ENCODE measurements at regions of chr2 and their contacts with region 1.

Region 1: GRCh38 chr2:68742626-68743415 is 8.2 kb downstream of the ARHGAP25 start:
- DNase-seq: no peak
- ATAC-seq: peak; percentile 49
- H3K4me3 Mint-ChIP-seq: peak overlapping the region; percentile 55
- H3K27ac Mint-ChIP-seq: peak overlapping the region; percentile 87
- H3K4me1 Mint-ChIP-seq: peaks cover 91% of the 10 kb centered on the region
- H3K27me3 Mint-ChIP-seq: no peaks in the 10 kb centered on the region
- CTCF ChIP-seq: no peak

Region 2: GRCh38 chr2:68487773-68488355 is 255.0 kb before region 1 on chr2:
- CTCF ChIA-PET with region 1: interaction called, 10 read pairs
- POLR2A ChIA-PET with region 1: no interaction called
- intact Hi-C with region 1: no loop called
- DNase-seq: no peak
- ATAC-seq: peak; percentile 54
- H3K4me3 Mint-ChIP-seq: no peak overlapping the region
- H3K27ac Mint-ChIP-seq: no peak overlapping the region
- H3K4me1 Mint-ChIP-seq: peaks cover 5% of the 10 kb centered on the region
- H3K27me3 Mint-ChIP-seq: no peaks in the 10 kb centered on the region
- CTCF ChIP-seq: peak; percentile 39

Region 3: GRCh38 chr2:68565858-68566257 is 177.0 kb before region 1 on chr2:
- CTCF ChIA-PET with region 1: no interaction called
- POLR2A ChIA-PET with region 1: no interaction called
- intact Hi-C with region 1: no loop called
- DNase-seq: no peak
- ATAC-seq: no peak
- H3K4me3 Mint-ChIP-seq: no peak overlapping the region
- H3K27ac Mint-ChIP-seq: no peak overlapping the region
- H3K4me1 Mint-ChIP-seq: no peaks in the 10 kb centered on the region
- H3K27me3 Mint-ChIP-seq: no peaks in the 10 kb centered on the region
- CTCF ChIP-seq: no peak

Region 4: DNA sequence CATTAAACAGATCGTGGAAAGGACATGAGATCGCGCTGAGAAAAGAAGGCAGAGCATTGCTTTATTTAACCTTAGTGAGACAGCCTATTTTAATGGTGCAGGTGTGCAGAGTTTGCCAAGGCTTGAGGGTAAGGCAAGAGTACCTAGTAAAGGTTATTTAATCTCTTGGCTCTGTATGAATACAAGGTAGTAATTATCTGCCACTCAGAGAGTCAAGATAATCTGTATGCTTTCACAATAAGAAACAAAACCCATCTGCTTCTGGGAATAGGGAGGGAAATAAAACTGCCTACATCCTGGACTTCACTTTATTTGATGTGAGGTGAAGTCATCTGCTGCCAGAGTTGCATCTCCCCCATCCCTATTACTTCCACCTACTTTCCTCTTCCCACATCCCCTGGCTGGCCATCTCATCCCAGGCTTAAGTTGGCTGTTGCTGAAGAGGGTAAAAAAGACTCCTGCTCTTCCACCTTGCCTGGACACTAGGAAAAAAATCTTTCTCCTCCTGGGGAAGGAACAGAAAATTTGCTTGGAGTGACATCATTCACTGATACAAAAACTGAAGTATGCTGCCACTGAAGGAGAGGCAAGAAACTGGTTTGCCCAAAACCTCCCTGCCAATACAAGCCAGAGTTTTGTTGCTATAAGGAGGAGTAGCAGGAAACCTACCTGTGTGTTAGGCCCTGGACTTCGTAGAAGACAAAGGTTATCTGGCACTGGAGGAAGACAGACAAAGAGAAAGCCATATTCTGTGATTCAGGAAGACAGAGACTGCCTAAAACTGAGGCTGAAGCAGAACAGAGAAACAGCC is 44.0 kb before region 1 on chr2:
- CTCF ChIA-PET with region 1: no interaction called
- POLR2A ChIA-PET with region 1: no interaction called
- intact Hi-C with region 1: no loop called
- DNase-seq: no peak
- ATAC-seq: no peak
- H3K4me3 Mint-ChIP-seq: no peak overlapping the region
- H3K27ac Mint-ChIP-seq: no peak overlapping the region
- H3K4me1 Mint-ChIP-seq: no peaks in the 10 kb centered on the region
- H3K27me3 Mint-ChIP-seq: no peaks in the 10 kb centered on the region
- CTCF ChIP-seq: no peak

Region 5: GRCh38 chr2:68726608-68727367 is 16.0 kb before region 1 on chr2:
- CTCF ChIA-PET with region 1: interaction called, 5 read pairs
- POLR2A ChIA-PET with region 1: interaction called, 74 read pairs
- intact Hi-C with region 1: loop called (anchors 1 kb)
- DNase-seq: peak; percentile 52
- ATAC-seq: peak; percentile 95
- H3K4me3 Mint-ChIP-seq: peak overlapping the region; percentile 29
- H3K27ac Mint-ChIP-seq: peak overlapping the region; percentile 78
- H3K4me1 Mint-ChIP-seq: peaks cover 49% of the 10 kb centered on the region
- H3K27me3 Mint-ChIP-seq: no peaks in the 10 kb centered on the region
- CTCF ChIP-seq: no peak

Region 6: GRCh38 chr2:68766376-68766845 is 23.6 kb after region 1 on chr2:
- CTCF ChIA-PET with region 1: interaction called, 4 read pairs
- POLR2A ChIA-PET with region 1: interaction called, 51 read pairs
- intact Hi-C with region 1: loop called (anchors 1 kb)
- DNase-seq: no peak
- ATAC-seq: peak; percentile 41
- H3K4me3 Mint-ChIP-seq: peak overlapping the region; percentile 67
- H3K27ac Mint-ChIP-seq: peak overlapping the region; percentile 96
- H3K4me1 Mint-ChIP-seq: peaks cover 98% of the 10 kb centered on the region
- H3K27me3 Mint-ChIP-seq: no peaks in the 10 kb centered on the region
- CTCF ChIP-seq: no peak

Region 7: GRCh38 chr2:68936427-68936826 is 193.6 kb after region 1 on chr2:
- CTCF ChIA-PET with region 1: no interaction called
- POLR2A ChIA-PET with region 1: no interaction called
- intact Hi-C with region 1: no loop called
- DNase-seq: no peak
- ATAC-seq: no peak
- H3K4me3 Mint-ChIP-seq: no peak overlapping the region
- H3K27ac Mint-ChIP-seq: no peak overlapping the region
- H3K4me1 Mint-ChIP-seq: no peaks in the 10 kb centered on the region
- H3K27me3 Mint-ChIP-seq: peaks cover 21% of the 10 kb centered on the region
- CTCF ChIP-seq: no peak

Measured in activated B cell treated with CpG ODN at 0.5 μM for 24 hours (primary cell).